ENCODE measurements at regions of chr1 and their contacts with region 1.

Region 1: GRCh38 chr1:207050768-207051614 is at the start of gene YOD1:
- DNase-seq: peak; percentile 79 to 95 (median 87)
- ATAC-seq: peak; percentile 49 to 59 (median 57)
- H3K4me3 ChIP-seq: peak within 1 kb of the TSS; percentile 98 to 100
- H3K4me3 Mint-ChIP-seq: peak within 1 kb of the TSS; percentile 94 to 99 (median 99)
- H3K27ac ChIP-seq: peak within 1 kb of the TSS; percentile 79
- H3K27ac Mint-ChIP-seq: peak within 1 kb of the TSS; percentile 89 to 96
- H3K4me1 ChIP-seq: peaks cover 18 to 32% of the 10 kb centered on the region in 2 experiments
- H3K4me1 Mint-ChIP-seq: peaks cover 62 to 74% (median 70%) of the 10 kb centered on the region in 3 donors
- H3K27me3 ChIP-seq: no peaks in the 10 kb centered on the region
- H3K27me3 Mint-ChIP-seq: no peaks in the 10 kb centered on the region
- total RNA-seq, gene YOD1: 7.8 to 13.5 (median 8.7) TPM

Region 2: DNA sequence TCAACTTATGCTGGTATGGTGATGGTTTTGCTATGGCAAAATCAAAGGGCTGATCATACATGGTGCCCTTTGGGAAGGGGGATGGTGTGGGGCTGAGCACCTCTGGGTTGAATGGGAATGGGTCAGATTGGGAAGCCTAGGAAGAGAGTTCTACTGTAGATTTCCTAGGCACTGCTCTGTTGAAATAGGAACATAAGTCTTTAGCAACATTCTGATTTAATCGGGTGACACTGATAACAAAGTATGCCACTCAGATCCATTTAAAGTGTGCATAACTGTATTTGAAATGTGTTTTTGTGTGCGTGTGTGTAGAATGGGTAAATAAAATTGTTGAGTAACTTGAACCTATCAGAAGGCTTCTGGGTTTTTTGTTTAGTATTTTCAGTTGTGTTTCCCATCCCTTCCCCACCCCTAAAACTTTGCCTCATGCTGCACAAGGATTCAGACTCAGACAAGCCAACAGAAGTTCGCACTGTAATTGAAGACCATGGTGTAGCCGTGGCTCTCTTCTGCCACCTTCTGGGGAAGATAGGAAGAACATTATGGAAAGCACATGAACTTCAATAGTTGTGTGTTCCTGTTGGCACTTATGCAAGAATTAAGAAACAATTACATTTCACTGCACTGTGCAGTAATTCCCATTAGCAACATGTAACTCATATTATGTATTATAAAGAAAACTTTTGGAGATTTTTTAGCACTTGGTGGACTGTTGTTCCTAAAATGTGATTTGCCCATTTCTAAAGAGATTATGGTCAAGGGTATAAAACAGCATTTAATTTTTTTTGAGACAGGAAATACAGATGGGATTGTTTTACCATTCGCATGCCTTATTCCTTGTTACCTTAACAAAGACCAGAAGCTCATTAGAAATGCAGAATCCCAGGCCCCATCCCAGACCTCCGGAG is 26.7 kb after region 1 on chr1:
- CTCF ChIA-PET with region 1: interaction called, 4 to 13 read pairs
- POLR2A ChIA-PET with region 1: interaction called in 1 of 2 experiments, 3 read pairs
- DNase-seq: peak in 34 of 35 experiments; percentile 31 to 88 (median 56)
- ATAC-seq: peak; percentile 85 to 92 (median 88)
- H3K4me3 ChIP-seq: no peak overlapping the region
- H3K4me3 Mint-ChIP-seq: no peak overlapping the region
- H3K27ac ChIP-seq: no peak overlapping the region
- H3K27ac Mint-ChIP-seq: no peak overlapping the region
- H3K4me1 ChIP-seq: no peaks in the 10 kb centered on the region
- H3K4me1 Mint-ChIP-seq: peaks cover 0 to 5% (median under 1%) of the 10 kb centered on the region in 3 donors
- H3K27me3 ChIP-seq: no peaks in the 10 kb centered on the region
- H3K27me3 Mint-ChIP-seq: peaks cover 0 to 12% of the 10 kb centered on the region in 2 donors